WTC11 (cell line): ENCODE measurements at regions of chr2 and their contacts with region 1.

Region 1: GRCh38 chr2:217993817-217994463 is 8.9 kb downstream of the TNS1 start:
- DNase-seq: peak; percentile 85
- ATAC-seq: peak; percentile 91
- H3K4me3 Mint-ChIP-seq: no peak overlapping the region
- H3K27ac Mint-ChIP-seq: no peak overlapping the region
- H3K4me1 Mint-ChIP-seq: peaks cover 16% of the 10 kb centered on the region
- H3K27me3 Mint-ChIP-seq: peaks cover 4% of the 10 kb centered on the region; the same call in 1 of the 2 replicates
- CTCF ChIP-seq: peak; percentile 90

Region 2: DNA sequence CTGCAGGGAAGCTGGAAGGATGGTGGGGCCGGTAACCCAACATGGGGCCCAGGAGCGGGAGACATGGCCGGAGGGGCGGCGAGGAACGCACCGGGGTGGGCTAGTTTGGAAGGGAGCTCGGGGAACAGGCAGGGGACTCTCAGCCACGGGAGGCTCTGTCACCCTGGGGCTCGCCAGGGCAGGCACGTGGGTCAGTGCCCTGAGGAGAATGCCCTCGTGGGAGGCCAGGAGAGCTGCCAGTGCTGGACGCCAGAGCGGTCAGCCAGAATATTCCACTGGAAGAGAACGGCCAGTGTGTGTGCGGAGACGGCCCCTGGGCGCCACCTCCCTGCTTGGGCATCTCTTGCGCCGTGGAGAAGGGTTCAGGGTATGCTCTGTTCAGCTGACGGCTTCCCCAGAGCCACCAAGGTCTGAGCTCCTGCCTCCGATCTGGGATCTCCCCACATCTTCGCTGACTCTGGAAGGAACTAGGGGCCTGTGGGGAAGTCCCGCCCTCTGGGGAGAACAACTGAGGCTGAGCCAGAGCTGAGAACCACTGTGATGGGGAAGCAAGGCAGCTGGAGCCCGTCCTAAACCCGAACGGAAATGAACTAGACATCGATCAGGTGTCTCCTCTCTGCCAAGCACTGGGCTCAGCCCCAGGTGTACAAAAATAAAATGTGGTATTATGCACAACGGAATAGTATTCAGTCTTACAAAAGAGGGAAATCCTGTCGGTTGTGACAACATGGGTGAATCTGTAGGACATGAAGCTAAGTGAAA is 1183.4 kb before region 1 on chr2:
- CTCF ChIA-PET with region 1: no interaction called
- POLR2A ChIA-PET with region 1: no interaction called
- DNase-seq: no peak
- ATAC-seq: no peak
- H3K4me3 Mint-ChIP-seq: no peak overlapping the region
- H3K27ac Mint-ChIP-seq: no peak overlapping the region
- H3K4me1 Mint-ChIP-seq: no peaks in the 10 kb centered on the region
- H3K27me3 Mint-ChIP-seq: no peaks in the 10 kb centered on the region
- CTCF ChIP-seq: no peak

Region 3: GRCh38 chr2:217785544-217786045 is 208.3 kb before region 1 on chr2:
- CTCF ChIA-PET with region 1: interaction called, 158 read pairs
- POLR2A ChIA-PET with region 1: no interaction called
- DNase-seq: peak; percentile 87
- ATAC-seq: peak; percentile 87
- H3K4me3 Mint-ChIP-seq: no peak overlapping the region
- H3K27ac Mint-ChIP-seq: no peak overlapping the region
- H3K4me1 Mint-ChIP-seq: peaks cover 13% of the 10 kb centered on the region
- H3K27me3 Mint-ChIP-seq: peaks cover 15% of the 10 kb centered on the region
- CTCF ChIP-seq: peak; percentile 97

Region 4: DNA sequence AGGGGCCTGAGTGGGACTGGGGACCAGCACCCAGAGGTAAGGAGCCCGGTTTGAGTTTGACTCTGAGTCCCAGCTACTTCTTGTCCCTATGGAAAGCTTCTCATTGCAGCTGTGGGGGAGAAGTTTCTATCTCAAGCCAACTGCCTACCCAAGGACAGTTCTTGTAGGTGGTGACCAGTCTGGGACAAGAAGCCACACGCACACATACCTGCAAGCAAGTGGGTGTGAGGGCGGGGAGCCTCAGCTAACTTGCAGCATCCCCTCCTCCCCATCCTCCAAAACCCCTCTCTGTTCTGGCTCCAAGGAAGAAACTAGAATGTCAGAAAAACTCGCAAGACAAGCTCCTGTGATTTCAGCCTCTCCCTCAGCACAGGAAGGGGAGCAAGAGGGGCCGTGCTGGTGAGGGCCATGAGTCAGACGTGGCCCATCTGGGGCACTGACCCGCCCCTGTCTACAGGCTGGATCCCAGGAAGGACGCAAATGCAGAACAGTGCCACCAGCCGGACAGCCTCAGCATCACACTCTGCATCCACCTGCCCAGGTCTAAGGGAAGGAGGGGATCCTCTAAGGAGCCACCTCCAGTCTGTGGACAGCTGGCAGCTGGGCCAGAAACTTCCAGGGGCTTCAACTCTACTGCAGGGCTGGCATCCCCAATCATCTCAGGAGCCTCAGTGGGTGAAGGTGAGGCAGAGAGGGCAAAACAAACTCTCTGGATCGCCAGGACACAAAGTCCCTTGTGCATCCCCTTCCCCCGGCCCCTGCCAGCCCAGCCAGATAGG is 94.5 kb before region 1 on chr2:
- CTCF ChIA-PET with region 1: interaction called, 26 read pairs
- POLR2A ChIA-PET with region 1: no interaction called
- DNase-seq: peak; percentile 89
- ATAC-seq: peak; percentile 97
- H3K4me3 Mint-ChIP-seq: no peak overlapping the region
- H3K27ac Mint-ChIP-seq: no peak overlapping the region
- H3K4me1 Mint-ChIP-seq: peaks cover 19% of the 10 kb centered on the region; the same call in 1 of the 2 replicates
- H3K27me3 Mint-ChIP-seq: no peaks in the 10 kb centered on the region
- CTCF ChIP-seq: peak; percentile 75

Region 5: GRCh38 chr2:217943446-217944389 is 50.2 kb before region 1 on chr2:
- CTCF ChIA-PET with region 1: interaction called, 27 read pairs
- POLR2A ChIA-PET with region 1: no interaction called
- DNase-seq: peak; percentile 81
- ATAC-seq: peak; percentile 94
- H3K4me3 Mint-ChIP-seq: peak overlapping the region; percentile 46
- H3K27ac Mint-ChIP-seq: no peak overlapping the region
- H3K4me1 Mint-ChIP-seq: peaks cover 24% of the 10 kb centered on the region
- H3K27me3 Mint-ChIP-seq: no peaks in the 10 kb centered on the region; the same call in 1 of the 2 replicates
- CTCF ChIP-seq: no peak

Region 6: DNA sequence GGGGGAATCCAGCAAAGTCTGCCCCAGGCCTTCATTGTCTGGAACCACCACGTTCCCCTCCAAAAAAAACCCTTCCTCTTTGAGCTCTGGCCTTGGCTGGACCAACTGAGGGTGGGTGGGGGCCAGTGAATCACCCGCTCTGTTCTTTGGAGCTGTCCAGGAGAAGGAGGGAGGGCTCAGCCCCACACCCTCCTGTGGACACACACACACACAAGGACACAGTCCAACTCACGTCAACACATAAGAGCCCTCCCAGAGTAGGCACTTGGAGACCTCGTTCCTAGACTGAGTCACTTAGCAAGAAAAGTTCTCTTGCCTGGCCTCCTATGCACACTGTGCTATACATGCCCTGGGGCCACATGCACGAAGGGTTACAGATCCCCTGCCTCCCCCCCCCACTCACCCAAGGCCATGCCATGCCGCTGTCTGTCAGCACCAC is 10.1 kb after region 1 on chr2:
- CTCF ChIA-PET with region 1: interaction called, 78 read pairs
- POLR2A ChIA-PET with region 1: no interaction called
- DNase-seq: no peak
- ATAC-seq: no peak
- H3K4me3 Mint-ChIP-seq: no peak overlapping the region
- H3K27ac Mint-ChIP-seq: no peak overlapping the region
- H3K4me1 Mint-ChIP-seq: peaks cover 37% of the 10 kb centered on the region
- H3K27me3 Mint-ChIP-seq: peaks cover 14% of the 10 kb centered on the region
- CTCF ChIP-seq: no peak

Region 7: DNA sequence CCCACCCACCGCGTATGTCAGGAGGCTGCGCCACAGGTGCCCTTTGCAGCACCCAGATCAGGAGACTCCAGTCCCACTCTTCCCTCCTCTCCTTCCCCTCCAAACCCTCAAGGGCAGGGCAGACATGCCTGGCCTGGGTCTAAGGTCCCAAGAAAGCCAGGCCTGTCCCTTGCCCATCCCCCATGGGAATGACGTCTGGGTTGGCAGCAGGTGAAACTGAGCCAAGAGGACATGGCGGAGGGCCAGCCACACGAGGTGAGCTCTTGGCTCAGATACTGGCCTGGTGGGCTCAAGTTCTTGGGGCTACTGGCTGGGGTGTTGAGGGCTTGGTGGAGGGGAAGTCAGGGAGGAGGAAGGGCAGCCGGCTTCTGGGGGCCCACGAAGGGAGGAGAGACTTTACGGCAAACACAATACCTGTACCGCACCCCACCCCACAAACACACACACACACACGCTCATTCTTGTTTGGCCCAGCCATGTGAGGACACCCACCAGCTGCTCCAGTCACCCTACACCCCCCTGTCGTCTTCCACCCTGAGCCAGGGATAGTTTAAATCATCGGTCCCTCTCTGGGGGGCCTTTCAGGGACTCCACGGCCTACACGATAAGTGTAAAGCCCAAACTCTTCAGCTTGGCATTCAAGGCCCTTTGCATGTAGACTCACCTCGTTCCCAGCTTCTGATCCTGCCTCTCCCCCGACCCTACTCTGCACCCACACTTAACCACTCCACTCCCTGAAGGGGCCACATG is 32.9 kb after region 1 on chr2:
- CTCF ChIA-PET with region 1: interaction called, 65 read pairs
- POLR2A ChIA-PET with region 1: no interaction called
- DNase-seq: peak; percentile 8
- ATAC-seq: no peak
- H3K4me3 Mint-ChIP-seq: no peak overlapping the region
- H3K27ac Mint-ChIP-seq: no peak overlapping the region
- H3K4me1 Mint-ChIP-seq: peaks cover 17% of the 10 kb centered on the region
- H3K27me3 Mint-ChIP-seq: peaks cover 2% of the 10 kb centered on the region; the same call in 1 of the 2 replicates
- CTCF ChIP-seq: no peak

Region 8: GRCh38 chr2:218216674-218217359 is 222.9 kb after region 1 on chr2 and contains the start of gene ARPC2:
- CTCF ChIA-PET with region 1: no interaction called
- POLR2A ChIA-PET with region 1: no interaction called
- DNase-seq: peak; percentile 86
- ATAC-seq: peak; percentile 73
- H3K4me3 Mint-ChIP-seq: peak within 1 kb of the TSS; percentile 91
- H3K27ac Mint-ChIP-seq: peak within 1 kb of the TSS; percentile 97
- H3K4me1 Mint-ChIP-seq: peaks cover 31% of the 10 kb centered on the region
- H3K27me3 Mint-ChIP-seq: no peaks in the 10 kb centered on the region
- CTCF ChIP-seq: no peak
- total RNA-seq, gene ARPC2: 169 to 184 TPM (median 173 TPM) in 3 replicates